ENCODE measurements at regions of chr7 and their contacts with region 1.

Region 1: GRCh38 chr7:455110-455928 is 64.3 kb downstream of the PDGFA start:
- DNase-seq: peak in 3 of 5 donors; percentile 42 to 58 (median 50)
- H3K4me3 ChIP-seq: no peak overlapping the region
- H3K27ac ChIP-seq: no peak overlapping the region
- H3K4me1 ChIP-seq: no peaks in the 10 kb centered on the region
- H3K27me3 ChIP-seq: no peaks in the 10 kb centered on the region
- CTCF ChIP-seq: no peak
- EP300 ChIP-seq: no peak
- POLR2A ChIP-seq: no peak

Region 2: GRCh38 chr7:1386623-1387220 is 931.4 kb after region 1 on chr7:
- intact Hi-C with region 1: loop called in 1 of 4 experiments (anchors 10 kb)
- DNase-seq: no peak
- H3K4me3 ChIP-seq: no peak overlapping the region
- H3K27ac ChIP-seq: no peak overlapping the region
- H3K4me1 ChIP-seq: no peaks in the 10 kb centered on the region
- H3K27me3 ChIP-seq: no peaks in the 10 kb centered on the region
- CTCF ChIP-seq: no peak
- EP300 ChIP-seq: no peak
- POLR2A ChIP-seq: no peak